AG04449 (cell line): ENCODE measurements at regions of chr17 and their contacts with region 1.

Region 1: GRCh38 chr17:46212634-46213435 is 19.6 kb upstream of the KANSL1 start:
- DNase-seq: peak; percentile 28
- H3K4me3 ChIP-seq: no peak overlapping the region
- CTCF ChIP-seq: peak; percentile 49

Region 2: DNA sequence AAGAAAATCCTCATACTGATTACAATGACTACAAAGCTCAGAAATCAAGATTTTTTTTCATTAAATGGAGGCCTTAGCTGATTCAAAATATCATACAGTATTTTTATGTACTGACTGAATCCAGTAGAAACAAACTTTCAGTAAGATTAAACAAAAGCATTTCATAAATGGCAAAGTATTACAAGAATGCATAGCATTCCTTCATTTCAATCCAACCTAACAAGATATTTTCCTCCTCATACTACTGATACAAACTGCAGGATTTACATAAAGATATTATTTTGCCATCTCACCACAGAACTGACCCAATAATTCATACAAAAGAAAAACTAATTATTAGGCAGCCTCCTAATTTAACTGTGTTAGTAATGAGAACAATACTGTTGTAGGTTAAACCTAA is 13.5 kb before region 1 on chr17:
- CTCF ChIA-PET with region 1: interaction called, 43 read pairs
- POLR2A ChIA-PET with region 1: no interaction called
- DNase-seq: no peak
- H3K4me3 ChIP-seq: no peak overlapping the region
- CTCF ChIP-seq: no peak